K562 (cell line): ENCODE measurements at regions of chr7 and their contacts with region 1.

Region 1: GRCh38 chr7:143504937-143505297 is 27.2 kb downstream of the TAS2R41 start:
- DNase-seq: no peak
- ATAC-seq: peak; percentile 63
- H3K4me3 ChIP-seq: no peak overlapping the region
- H3K27ac ChIP-seq: peak overlapping the region; percentile 57; the same call in 2 of the 3 replicates
- H3K4me1 ChIP-seq: peaks cover 5 to 25% of the 10 kb centered on the region in 2 experiments
- H3K27me3 ChIP-seq: no peaks in the 10 kb centered on the region
- CTCF ChIP-seq: peak in 2 of 3 experiments; percentile 43 to 46; a peak in 4 of 6 replicates
- EP300 ChIP-seq: no peak
- POLR2A ChIP-seq: no peak
- RAD21 ChIP-seq: peak; percentile 32 to 57; a peak in 3 of 4 replicates

Region 2: GRCh38 chr7:143490717-143491306 is 14.1 kb before region 1 on chr7:
- CTCF ChIA-PET with region 1: no interaction called
- POLR2A ChIA-PET with region 1: interaction called, 5 read pairs
- in situ Hi-C with region 1: no loop called
- intact Hi-C with region 1: loop called (anchors 1 kb)
- DNase-seq: peak; percentile 41 to 70 (median 60)
- ATAC-seq: peak; percentile 93
- H3K4me3 ChIP-seq: no peak overlapping the region
- H3K27ac ChIP-seq: no peak overlapping the region
- H3K4me1 ChIP-seq: peaks cover 7 to 18% of the 10 kb centered on the region in 2 experiments; a peak in 4 of 5 replicates
- H3K27me3 ChIP-seq: peaks cover 0 to 8% of the 10 kb centered on the region in 2 experiments; a peak in 1 of 5 replicates
- CTCF ChIP-seq: peak; percentile 85 to 93 (median 88)
- EP300 ChIP-seq: no peak
- POLR2A ChIP-seq: no peak
- RAD21 ChIP-seq: peak; percentile 81 to 90

Region 3: GRCh38 chr7:143519411-143520131 is 14.7 kb after region 1 on chr7:
- CTCF ChIA-PET with region 1: no interaction called
- POLR2A ChIA-PET with region 1: interaction called, 7 read pairs
- in situ Hi-C with region 1: no loop called
- intact Hi-C with region 1: loop called (anchors 1 kb)
- DNase-seq: no peak
- ATAC-seq: no peak; the same call in 1 of the 3 replicates
- H3K4me3 ChIP-seq: no peak overlapping the region
- H3K27ac ChIP-seq: no peak overlapping the region
- H3K4me1 ChIP-seq: no peaks in the 10 kb centered on the region
- H3K27me3 ChIP-seq: peaks cover 27 to 32% of the 10 kb centered on the region in 2 experiments
- CTCF ChIP-seq: no peak
- EP300 ChIP-seq: no peak
- POLR2A ChIP-seq: no peak
- RAD21 ChIP-seq: no peak